ENCODE measurements at regions of chr12 and their contacts with region 1.

Region 1: DNA sequence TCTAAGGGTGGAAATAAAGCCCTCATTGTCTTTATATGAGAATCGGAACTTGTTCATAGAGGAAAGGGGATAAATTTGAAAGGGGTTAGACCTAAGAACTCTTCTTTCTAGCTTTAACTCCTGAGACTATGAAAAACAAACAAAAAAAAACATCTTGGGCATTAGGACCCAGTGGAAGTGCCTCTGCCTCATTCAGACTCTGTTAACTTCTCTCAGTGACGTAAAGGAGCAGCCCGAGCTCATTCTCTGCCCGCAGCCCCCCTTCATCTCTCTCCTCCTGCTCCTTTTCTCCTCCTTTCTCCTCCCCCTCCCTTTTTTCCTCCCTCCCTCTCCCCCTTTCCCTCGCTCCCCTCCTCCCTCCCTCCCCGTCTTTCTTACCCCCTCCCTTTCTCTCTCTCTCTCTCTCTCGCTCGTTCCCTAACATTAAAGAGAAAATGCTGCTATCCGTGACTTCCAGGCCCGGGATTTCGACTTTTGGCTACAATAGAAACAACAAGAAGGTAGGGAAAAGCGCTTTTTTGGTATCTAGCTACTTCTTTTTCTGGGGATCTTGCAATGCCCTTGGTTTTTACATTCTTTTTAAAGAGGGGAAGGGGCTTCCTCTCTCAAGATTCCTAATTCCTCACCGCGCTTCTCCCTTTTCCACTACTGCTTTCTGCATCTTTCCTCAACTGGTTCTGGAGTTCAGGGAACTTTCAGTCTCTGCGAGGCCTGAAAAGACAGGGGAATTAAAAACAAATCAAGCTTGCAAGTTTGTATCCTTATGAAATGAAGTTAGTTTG is at the start of gene RBMS2:
- DNase-seq: peak; percentile 88 to 95
- H3K4me3 ChIP-seq: peak within 1 kb of the TSS; percentile 62 to 74
- H3K27ac ChIP-seq: peak within 1 kb of the TSS; percentile 89
- H3K4me1 ChIP-seq: peaks cover 0 to 62% (median 35%) of the 10 kb centered on the region in 4 donors
- H3K27me3 ChIP-seq: no peaks in the 10 kb centered on the region
- CTCF ChIP-seq: no peak

Region 2: GRCh38 chr12:56636675-56637540 is 115.1 kb after region 1 on chr12:
- intact Hi-C with region 1: loop called (anchors 2 kb)
- DNase-seq: peak; percentile 100
- H3K4me3 ChIP-seq: peak overlapping the region; percentile 63 to 86
- H3K27ac ChIP-seq: peak overlapping the region; percentile 88 to 92
- H3K4me1 ChIP-seq: peaks cover 0 to 32% (median 30%) of the 10 kb centered on the region in 4 donors
- H3K27me3 ChIP-seq: no peaks in the 10 kb centered on the region
- CTCF ChIP-seq: peak; percentile 42 to 50

Region 3: DNA sequence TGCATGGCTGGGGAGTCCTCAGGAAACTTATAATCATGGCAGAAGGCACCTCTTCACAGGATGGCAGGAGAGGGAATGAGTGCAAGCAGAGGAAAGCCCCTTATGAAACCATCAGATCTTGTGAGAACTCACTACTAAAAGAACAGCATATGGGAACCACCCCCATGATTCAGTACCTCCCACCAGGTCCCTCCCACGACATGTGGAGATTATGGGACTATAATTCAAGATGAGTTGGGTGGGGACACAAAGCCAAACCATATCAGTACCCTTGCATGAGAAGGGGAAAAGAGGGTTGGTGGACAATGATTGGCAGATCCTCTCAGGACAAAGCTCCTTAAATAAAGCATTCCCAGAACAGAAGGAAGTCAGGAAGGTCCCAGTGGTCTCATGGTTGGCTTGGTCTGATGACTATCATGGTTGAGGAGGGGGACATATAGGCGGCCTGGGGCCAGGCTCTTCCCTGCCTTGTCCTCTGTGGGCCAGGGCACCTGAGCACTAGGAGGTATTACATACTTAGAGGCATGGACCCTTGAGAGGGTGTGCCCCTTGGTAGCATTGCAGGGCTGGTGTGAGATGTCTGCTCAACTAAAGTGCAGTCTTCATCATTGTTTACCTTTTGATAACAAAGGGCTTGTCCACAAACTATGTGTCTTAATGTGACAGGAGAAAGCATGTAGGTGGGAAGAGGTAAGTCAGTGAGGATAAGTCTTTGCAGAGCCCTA is 263.5 kb after region 1 on chr12:
- intact Hi-C with region 1: no loop called
- DNase-seq: no peak
- H3K4me3 ChIP-seq: no peak overlapping the region
- H3K27ac ChIP-seq: no peak overlapping the region
- H3K4me1 ChIP-seq: no peaks in the 10 kb centered on the region
- H3K27me3 ChIP-seq: no peaks in the 10 kb centered on the region
- CTCF ChIP-seq: no peak

Measured in tibial artery (tissue), 4 donors.